GM10248 (cell line): ENCODE measurements at regions of chr3 and their contacts with region 1.

Region 1: DNA sequence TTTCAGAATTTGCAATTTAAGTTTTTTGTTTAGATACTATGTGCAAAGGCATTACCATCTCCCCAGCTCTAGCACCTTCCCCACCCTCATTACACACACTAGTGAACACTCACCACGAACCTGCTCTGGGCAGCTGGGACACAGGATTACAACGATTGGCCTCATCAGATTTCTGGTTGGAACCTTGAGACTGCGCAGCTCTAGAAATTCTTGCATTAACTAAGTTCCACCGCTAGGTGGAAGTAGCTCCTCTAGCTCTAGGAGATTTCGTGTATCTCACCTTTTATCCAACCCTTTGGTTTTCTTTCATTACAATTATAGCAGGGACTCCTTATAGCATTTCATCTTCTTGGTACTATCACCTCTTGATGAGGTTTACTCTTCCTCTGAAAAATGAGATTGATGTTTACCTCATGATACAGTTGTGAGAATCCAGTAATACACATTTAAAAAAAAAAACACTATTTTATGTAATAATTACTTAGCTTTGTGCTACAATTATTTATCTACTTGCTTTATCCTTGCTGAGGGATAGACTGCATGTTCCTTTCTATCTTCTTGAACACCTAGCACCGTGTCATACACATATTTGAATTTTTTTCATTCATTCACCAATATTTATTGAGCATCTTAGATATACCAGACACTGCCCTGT is 28.7 kb upstream of the PLOD2 start:
- DNase-seq: peak; percentile 45
- CTCF ChIP-seq: peak; percentile 76

Region 2: GRCh38 chr3:145776782-145777408 is 412.8 kb before region 1 on chr3:
- CTCF ChIA-PET with region 1: interaction called, 19 read pairs
- POLR2A ChIA-PET with region 1: no interaction called
- DNase-seq: peak; percentile 17
- CTCF ChIP-seq: peak; percentile 47

Region 3: DNA sequence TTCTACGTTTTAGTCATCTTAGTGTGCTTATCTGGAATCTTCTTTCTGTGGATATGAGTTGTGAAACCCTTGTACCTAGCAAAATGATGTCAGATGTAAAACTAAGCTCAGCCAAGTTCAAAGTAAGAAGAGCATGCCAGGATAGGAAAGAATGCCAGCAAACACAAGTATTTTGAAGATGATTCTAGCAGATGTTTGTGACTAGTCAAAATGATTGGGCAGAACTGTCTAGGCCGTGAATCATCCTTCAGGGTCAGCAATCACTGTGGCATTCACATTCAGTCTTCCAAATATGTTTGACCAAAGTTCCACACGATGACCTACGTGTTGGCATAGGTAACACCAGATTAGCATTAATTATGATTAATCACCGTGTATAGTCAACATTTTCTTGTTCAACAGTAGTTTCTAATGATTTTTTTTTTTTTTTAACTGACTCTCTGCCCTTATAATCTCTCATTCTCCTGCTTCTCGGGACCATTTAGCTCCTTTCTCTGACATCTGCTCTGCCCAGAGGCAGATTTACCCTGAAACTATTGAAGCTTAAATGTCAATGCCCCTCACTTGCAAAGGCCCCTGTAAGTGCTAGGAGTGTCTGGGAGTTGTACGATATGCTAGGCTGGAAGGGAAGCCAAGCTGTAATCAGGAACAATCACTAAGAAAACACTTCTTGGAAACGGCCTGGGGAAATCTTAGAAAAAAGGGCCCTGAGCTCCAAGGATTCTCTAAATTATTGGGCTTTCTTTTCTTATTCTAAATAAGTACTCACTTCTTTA is 23.0 kb before region 1 on chr3:
- CTCF ChIA-PET with region 1: interaction called, 27 read pairs
- POLR2A ChIA-PET with region 1: no interaction called
- DNase-seq: no peak
- CTCF ChIP-seq: no peak

Region 4: GRCh38 chr3:146200461-146201220 is 11.0 kb after region 1 on chr3:
- CTCF ChIA-PET with region 1: interaction called, 15 read pairs
- POLR2A ChIA-PET with region 1: no interaction called
- DNase-seq: no peak
- CTCF ChIP-seq: no peak

Region 5: GRCh38 chr3:146416366-146416765 is 226.7 kb after region 1 on chr3:
- CTCF ChIA-PET with region 1: no interaction called
- POLR2A ChIA-PET with region 1: no interaction called
- DNase-seq: no peak
- CTCF ChIP-seq: no peak

Region 6: DNA sequence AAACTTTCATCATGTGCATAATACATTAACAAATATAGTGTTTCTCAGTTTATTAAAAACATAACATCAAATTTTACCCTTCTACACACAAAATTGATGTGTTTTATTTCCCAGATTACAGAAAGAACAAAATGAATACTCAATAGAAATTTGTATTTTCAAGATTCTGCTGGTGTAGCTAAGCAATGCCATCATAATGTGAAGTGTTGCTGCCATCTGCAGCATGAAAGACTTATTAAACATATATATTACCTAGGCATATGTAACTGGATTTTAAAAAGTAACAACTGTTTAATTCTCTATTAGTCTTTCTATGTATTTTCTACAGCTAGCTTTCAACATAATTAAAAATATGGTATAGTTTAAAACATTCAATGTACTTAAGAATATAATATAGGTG is 388.0 kb after region 1 on chr3:
- CTCF ChIA-PET with region 1: interaction called, 28 read pairs
- POLR2A ChIA-PET with region 1: no interaction called
- DNase-seq: no peak
- CTCF ChIP-seq: peak; percentile 38